BJ (cell line): ENCODE measurements at regions of chr9 and their contacts with region 1.

Region 1: DNA sequence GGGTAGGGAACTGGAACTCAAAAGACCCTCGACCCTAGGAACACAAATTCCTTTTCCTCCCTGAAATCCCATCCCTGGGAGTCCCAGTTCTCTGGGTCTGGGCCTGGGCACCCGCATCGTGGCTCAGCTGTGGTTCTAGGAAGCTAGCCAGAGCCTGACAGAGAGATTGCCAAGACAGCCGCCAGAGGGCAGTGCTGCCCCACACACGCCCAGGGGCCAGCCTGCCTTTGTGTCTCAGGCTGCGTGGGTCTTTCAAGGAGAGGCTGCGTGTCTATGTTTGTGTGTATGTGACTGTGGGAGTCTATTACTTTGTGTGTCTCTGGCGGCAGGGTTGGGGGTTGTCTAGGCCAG is 32.0 kb upstream of the TTLL11 start:
- DNase-seq: no peak
- H3K4me3 ChIP-seq: no peak overlapping the region
- H3K27me3 ChIP-seq: no peaks in the 10 kb centered on the region
- CTCF ChIP-seq: peak; percentile 97

Region 2: DNA sequence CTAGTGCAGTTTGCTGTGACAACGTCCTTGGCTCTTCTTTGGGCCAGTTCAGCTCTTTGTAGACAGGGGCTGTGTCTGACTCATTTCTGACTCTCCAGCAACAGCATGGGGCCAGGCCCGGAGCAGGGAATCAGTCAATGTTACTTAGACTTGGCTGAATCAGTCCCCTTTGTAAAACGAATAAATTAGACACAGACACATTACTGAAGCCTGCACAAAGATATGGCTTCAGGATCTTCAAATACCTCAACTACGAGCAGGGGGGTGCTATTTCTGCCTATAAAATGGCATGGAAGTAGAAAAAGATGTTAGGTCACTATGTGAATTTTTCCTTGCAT is 236.7 kb before region 1 on chr9:
- CTCF ChIA-PET with region 1: no interaction called
- POLR2A ChIA-PET with region 1: no interaction called
- DNase-seq: peak; percentile 79
- H3K4me3 ChIP-seq: no peak overlapping the region
- H3K27me3 ChIP-seq: no peaks in the 10 kb centered on the region
- CTCF ChIP-seq: peak; percentile 27; the same call in 1 of the 2 replicates

Region 3: DNA sequence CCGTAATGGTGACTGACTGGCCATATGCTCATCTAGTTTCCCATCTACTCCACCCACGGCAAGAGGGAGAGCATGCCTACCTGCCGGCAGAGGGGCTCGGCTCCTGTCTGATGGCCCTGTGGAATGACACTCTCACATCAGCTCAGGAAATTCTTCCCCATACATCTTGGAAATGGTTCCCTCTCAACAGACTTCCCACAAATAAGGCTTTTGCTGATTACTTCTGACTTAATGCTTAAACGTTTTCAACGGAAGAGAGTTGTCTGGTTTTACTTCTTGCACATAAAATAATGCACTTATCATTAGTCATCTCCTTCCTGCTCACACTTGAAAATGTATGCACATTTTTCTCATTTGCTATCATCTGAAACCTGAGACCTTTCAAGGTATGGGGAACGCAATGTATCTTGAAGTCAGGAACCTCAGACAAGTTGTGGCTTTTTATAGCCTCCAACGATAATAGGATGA is 161.6 kb before region 1 on chr9:
- CTCF ChIA-PET with region 1: no interaction called
- POLR2A ChIA-PET with region 1: no interaction called
- DNase-seq: no peak
- H3K4me3 ChIP-seq: no peak overlapping the region
- H3K27me3 ChIP-seq: no peaks in the 10 kb centered on the region
- CTCF ChIP-seq: no peak

Region 4: GRCh38 chr9:122065923-122066629 is 59.1 kb before region 1 on chr9:
- CTCF ChIA-PET with region 1: no interaction called
- POLR2A ChIA-PET with region 1: no interaction called
- DNase-seq: no peak
- H3K4me3 ChIP-seq: no peak overlapping the region
- H3K27me3 ChIP-seq: no peaks in the 10 kb centered on the region
- CTCF ChIP-seq: no peak

Region 5: GRCh38 chr9:122107291-122107805 is 17.8 kb before region 1 on chr9:
- CTCF ChIA-PET with region 1: interaction called, 100 read pairs
- POLR2A ChIA-PET with region 1: no interaction called
- DNase-seq: no peak
- H3K4me3 ChIP-seq: no peak overlapping the region
- H3K27me3 ChIP-seq: no peaks in the 10 kb centered on the region
- CTCF ChIP-seq: no peak

Region 6: DNA sequence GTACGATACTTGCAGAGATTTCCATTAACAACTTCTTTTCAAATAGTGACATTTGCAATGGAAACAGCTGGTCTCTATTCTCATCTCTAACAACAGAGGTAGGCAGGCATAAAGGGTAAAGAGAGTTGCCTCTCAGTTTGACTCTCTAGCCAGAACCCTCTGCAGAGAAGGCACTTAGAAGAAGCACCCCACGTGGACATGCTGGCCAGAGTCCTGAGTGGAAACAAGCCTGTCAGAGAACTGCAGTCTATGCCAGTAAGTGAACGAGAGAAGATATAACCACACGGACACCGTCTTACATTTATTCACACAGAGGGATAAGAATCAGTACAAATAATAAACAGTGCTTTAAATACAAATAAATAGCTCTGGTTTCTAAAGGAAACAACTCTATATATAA is 114.6 kb after region 1 on chr9:
- CTCF ChIA-PET with region 1: no interaction called
- POLR2A ChIA-PET with region 1: no interaction called
- DNase-seq: no peak
- H3K4me3 ChIP-seq: no peak overlapping the region
- H3K27me3 ChIP-seq: no peaks in the 10 kb centered on the region
- CTCF ChIP-seq: no peak

Region 7: GRCh38 chr9:122338994-122339393 is 213.9 kb after region 1 on chr9:
- CTCF ChIA-PET with region 1: interaction called, 422 read pairs
- POLR2A ChIA-PET with region 1: no interaction called
- DNase-seq: no peak
- H3K4me3 ChIP-seq: no peak overlapping the region
- H3K27me3 ChIP-seq: no peaks in the 10 kb centered on the region; the same call in 1 of the 2 replicates
- CTCF ChIP-seq: no peak

Region 8: DNA sequence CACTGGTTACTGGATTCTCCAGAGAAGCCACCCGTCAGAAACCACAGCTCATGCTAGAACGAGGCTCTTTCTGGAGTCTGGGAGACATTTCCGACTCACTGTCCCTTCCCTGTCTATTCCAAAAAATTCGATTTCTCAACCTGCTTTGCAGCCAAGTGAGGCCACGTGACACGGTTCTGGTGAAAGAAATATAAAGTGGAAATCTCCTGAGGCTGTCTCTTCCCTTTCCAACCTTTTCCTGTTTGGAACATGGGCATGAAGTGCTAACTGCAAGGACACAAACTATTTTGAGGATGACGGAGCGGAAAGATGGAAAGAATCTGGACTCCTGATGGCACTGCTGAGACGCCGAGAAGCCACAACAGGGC is 239.6 kb after region 1 on chr9:
- CTCF ChIA-PET with region 1: interaction called, 26 read pairs
- POLR2A ChIA-PET with region 1: no interaction called
- DNase-seq: peak; percentile 26
- H3K4me3 ChIP-seq: no peak overlapping the region
- H3K27me3 ChIP-seq: no peaks in the 10 kb centered on the region
- CTCF ChIP-seq: no peak

Region 9: GRCh38 chr9:122453677-122454135 is 328.6 kb after region 1 on chr9:
- CTCF ChIA-PET with region 1: interaction called, 24 read pairs
- POLR2A ChIA-PET with region 1: no interaction called
- DNase-seq: no peak
- H3K4me3 ChIP-seq: no peak overlapping the region
- H3K27me3 ChIP-seq: no peaks in the 10 kb centered on the region
- CTCF ChIP-seq: no peak